Panc1 (cell line): ENCODE measurements at regions of chr7 and their contacts with region 1.

Region 1: DNA sequence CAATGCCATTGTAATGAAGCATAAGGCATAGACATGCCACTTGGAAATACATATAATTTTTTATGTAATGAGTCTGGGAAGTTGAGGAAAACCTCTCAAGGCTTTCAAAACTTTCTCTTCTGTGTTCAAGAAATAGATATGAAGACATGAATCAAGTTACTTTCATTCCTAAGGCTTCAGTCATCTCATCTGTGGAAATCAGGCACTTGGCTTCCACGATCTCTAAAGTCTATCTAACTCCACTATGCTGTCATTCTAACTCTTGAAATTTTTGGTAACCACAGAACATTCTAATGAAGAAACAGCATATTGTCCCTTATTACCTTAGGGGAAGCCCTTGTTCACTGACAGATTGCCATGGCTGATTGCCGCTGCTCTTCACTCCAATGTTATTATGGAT is 242.6 kb downstream of the CNTNAP2 start:
- DNase-seq: no peak
- ATAC-seq: no peak
- H3K4me3 ChIP-seq: no peak overlapping the region
- H3K27ac ChIP-seq: no peak overlapping the region
- H3K4me1 ChIP-seq: no peaks in the 10 kb centered on the region
- H3K27me3 ChIP-seq: no peaks in the 10 kb centered on the region
- CTCF ChIP-seq: no peak

Region 2: GRCh38 chr7:146433501-146433900 is 74.3 kb after region 1 on chr7:
- CTCF ChIA-PET with region 1: no interaction called
- POLR2A ChIA-PET with region 1: interaction called, 10 read pairs
- in situ Hi-C with region 1: no loop called
- intact Hi-C with region 1: no loop called
- DNase-seq: no peak
- ATAC-seq: no peak
- H3K4me3 ChIP-seq: no peak overlapping the region
- H3K27ac ChIP-seq: no peak overlapping the region
- H3K4me1 ChIP-seq: no peaks in the 10 kb centered on the region
- H3K27me3 ChIP-seq: no peaks in the 10 kb centered on the region
- CTCF ChIP-seq: no peak